HCT116 (cell line): ENCODE measurements at regions of chr18 and their contacts with region 1.

Region 1: GRCh38 chr18:10020171-10020570 is 106.4 kb downstream of the VAPA start:
- DNase-seq: no peak
- ATAC-seq: no peak
- H3K4me3 ChIP-seq: no peak overlapping the region
- H3K27ac ChIP-seq: no peak overlapping the region
- H3K4me1 ChIP-seq: peaks cover 5 to 10% of the 10 kb centered on the region in 2 experiments; a peak in 2 of 4 replicates
- H3K27me3 ChIP-seq: no peaks in the 10 kb centered on the region
- CTCF ChIP-seq: no peak
- POLR2A ChIP-seq: no peak
- RAD21 ChIP-seq: no peak

Region 2: DNA sequence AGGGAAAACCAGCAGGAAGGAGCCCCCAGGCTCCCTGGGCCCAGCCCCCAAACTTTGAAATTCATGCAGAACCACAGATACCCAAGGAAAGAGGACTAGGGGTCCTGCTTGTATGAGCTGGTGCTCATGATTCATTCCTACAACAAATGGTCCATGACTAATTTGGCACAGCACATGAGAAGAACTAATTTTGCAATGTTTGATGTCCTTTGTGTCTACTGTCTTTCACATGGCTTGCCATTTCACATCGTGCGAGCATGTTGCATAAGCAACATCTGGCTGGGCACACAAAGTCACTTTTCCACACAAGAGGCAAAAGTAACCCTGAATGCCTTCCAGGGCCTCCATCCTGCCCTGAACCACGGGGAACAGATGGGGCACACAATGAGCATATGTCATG is 284.7 kb after region 1 on chr18:
- CTCF ChIA-PET with region 1: no interaction called
- POLR2A ChIA-PET with region 1: no interaction called
- RAD21 ChIA-PET with region 1: no interaction called
- intact Hi-C with region 1: loop called (anchors 10 kb)
- DNase-seq: no peak
- ATAC-seq: no peak
- H3K4me3 ChIP-seq: no peak overlapping the region
- H3K27ac ChIP-seq: no peak overlapping the region
- H3K4me1 ChIP-seq: no peaks in the 10 kb centered on the region
- H3K27me3 ChIP-seq: peaks cover 27% of the 10 kb centered on the region
- CTCF ChIP-seq: no peak
- POLR2A ChIP-seq: no peak
- RAD21 ChIP-seq: no peak